ENCODE measurements at regions of chrX and their contacts with region 1.

Region 1: GRCh38 chrX:81489987-81490386 is 288.1 kb downstream of the SH3BGRL start:
- DNase-seq: no peak
- H3K4me3 Mint-ChIP-seq: no peak overlapping the region
- H3K27ac Mint-ChIP-seq: no peak overlapping the region
- H3K4me1 Mint-ChIP-seq: no peaks in the 10 kb centered on the region
- H3K27me3 Mint-ChIP-seq: no peaks in the 10 kb centered on the region
- CTCF ChIP-seq: no peak

Region 2: GRCh38 chrX:81348388-81348787 is 141.6 kb before region 1 on chrX:
- CTCF ChIA-PET with region 1: no interaction called
- intact Hi-C with region 1: no loop called
- DNase-seq: no peak
- H3K4me3 Mint-ChIP-seq: no peak overlapping the region
- H3K27ac Mint-ChIP-seq: no peak overlapping the region
- H3K4me1 Mint-ChIP-seq: no peaks in the 10 kb centered on the region
- H3K27me3 Mint-ChIP-seq: no peaks in the 10 kb centered on the region
- CTCF ChIP-seq: no peak

Region 3: GRCh38 chrX:81537723-81538122 is 47.7 kb after region 1 on chrX:
- CTCF ChIA-PET with region 1: no interaction called
- intact Hi-C with region 1: loop called (anchors 5 kb)
- DNase-seq: no peak
- H3K4me3 Mint-ChIP-seq: no peak overlapping the region
- H3K27ac Mint-ChIP-seq: no peak overlapping the region
- H3K4me1 Mint-ChIP-seq: peaks cover 9% of the 10 kb centered on the region
- H3K27me3 Mint-ChIP-seq: no peaks in the 10 kb centered on the region
- CTCF ChIP-seq: no peak

Region 4: DNA sequence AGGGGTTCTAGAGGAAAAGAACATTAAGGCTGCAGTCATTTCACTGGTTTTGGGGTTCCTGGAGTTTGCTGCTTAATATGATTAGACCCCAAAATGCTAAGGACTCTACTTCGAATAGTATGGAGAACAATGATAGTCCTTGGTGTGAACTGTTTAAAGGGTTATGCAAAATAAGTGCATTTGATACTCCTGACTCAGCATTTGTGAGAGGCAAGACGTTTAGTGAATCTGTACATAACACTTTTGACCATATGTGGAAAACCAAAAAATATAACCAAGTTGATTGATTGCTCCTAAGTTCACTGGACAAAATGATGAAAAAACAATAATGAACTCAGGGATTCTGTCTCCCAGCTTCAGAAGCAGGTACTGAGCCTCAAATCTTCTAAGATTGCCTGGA is 126.0 kb after region 1 on chrX:
- CTCF ChIA-PET with region 1: no interaction called
- intact Hi-C with region 1: no loop called
- DNase-seq: no peak
- H3K4me3 Mint-ChIP-seq: no peak overlapping the region
- H3K27ac Mint-ChIP-seq: no peak overlapping the region
- H3K4me1 Mint-ChIP-seq: no peaks in the 10 kb centered on the region
- H3K27me3 Mint-ChIP-seq: no peaks in the 10 kb centered on the region
- CTCF ChIP-seq: no peak

Region 5: GRCh38 chrX:81662381-81662780 is 172.4 kb after region 1 on chrX:
- CTCF ChIA-PET with region 1: no interaction called
- intact Hi-C with region 1: loop called (anchors 10 kb)
- DNase-seq: no peak
- H3K4me3 Mint-ChIP-seq: peak overlapping the region; percentile 4
- H3K27ac Mint-ChIP-seq: peak overlapping the region; percentile 63
- H3K4me1 Mint-ChIP-seq: peaks cover 14% of the 10 kb centered on the region
- H3K27me3 Mint-ChIP-seq: no peaks in the 10 kb centered on the region
- CTCF ChIP-seq: no peak

Region 6: DNA sequence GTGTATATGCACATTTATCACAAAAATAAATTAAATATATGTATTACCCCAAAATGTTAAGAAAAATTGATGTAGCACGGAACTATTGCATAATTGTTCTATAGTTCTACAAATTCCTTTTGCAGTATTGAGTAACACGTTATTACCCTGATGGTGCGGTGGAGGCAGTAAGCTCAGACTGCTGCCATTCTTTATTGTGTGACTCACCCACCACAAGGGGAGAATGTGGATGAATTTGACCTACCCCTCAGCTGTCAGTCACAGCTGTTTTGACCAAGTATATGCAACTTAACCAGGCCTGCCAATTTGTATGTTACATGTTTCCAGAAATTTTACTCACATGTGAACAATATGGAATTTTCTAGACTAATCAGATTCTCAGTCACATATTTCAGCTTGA is 218.5 kb after region 1 on chrX:
- CTCF ChIA-PET with region 1: no interaction called
- intact Hi-C with region 1: loop called (anchors 5 kb)
- DNase-seq: peak; percentile 44
- H3K4me3 Mint-ChIP-seq: no peak overlapping the region
- H3K27ac Mint-ChIP-seq: no peak overlapping the region
- H3K4me1 Mint-ChIP-seq: peaks cover 10% of the 10 kb centered on the region
- H3K27me3 Mint-ChIP-seq: no peaks in the 10 kb centered on the region
- CTCF ChIP-seq: no peak

Region 7: DNA sequence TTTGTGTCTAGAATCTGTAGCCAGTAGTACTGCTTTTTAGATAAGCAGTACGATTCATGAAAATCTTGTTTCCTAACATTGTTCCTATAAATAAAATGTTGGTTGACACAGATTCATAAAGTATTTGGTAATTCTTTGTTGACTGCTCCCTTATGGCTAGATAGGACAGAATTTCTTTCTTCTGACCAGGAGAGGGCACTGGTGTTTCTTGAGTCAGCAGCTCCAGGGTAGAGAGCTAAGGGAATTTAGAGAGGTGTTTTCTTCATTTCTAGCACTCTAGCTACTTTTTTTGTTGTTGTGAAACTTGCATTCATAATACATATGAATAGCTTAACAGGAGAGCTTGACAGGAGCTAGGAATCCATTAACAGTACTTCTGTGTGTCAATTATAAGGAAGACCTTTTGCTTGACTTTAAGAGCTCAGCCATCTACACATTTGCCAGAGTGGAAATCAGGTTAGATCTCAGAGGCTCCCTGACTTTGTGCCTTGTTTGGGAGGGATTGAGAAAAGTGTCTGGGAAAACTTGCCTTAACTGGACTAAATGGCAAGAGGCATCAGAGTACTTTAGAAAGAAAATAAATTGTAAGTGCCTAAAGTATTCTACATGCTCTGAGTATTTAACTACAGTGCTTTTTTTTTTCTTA is 468.0 kb after region 1 on chrX:
- CTCF ChIA-PET with region 1: no interaction called
- intact Hi-C with region 1: loop called (anchors 10 kb)
- DNase-seq: peak; percentile 23
- H3K4me3 Mint-ChIP-seq: no peak overlapping the region
- H3K27ac Mint-ChIP-seq: no peak overlapping the region
- H3K4me1 Mint-ChIP-seq: no peaks in the 10 kb centered on the region
- H3K27me3 Mint-ChIP-seq: no peaks in the 10 kb centered on the region
- CTCF ChIP-seq: no peak

Measured in Calu3 (cell line).